PC-9 (cell line): ENCODE measurements at regions of chr2 and their contacts with region 1.

Region 1: GRCh38 chr2:235595422-235596010 is 101.7 kb downstream of the AGAP1 start:
- DNase-seq: peak; percentile 71 to 83
- H3K4me3 ChIP-seq: no peak overlapping the region
- H3K27ac ChIP-seq: no peak overlapping the region
- H3K4me1 ChIP-seq: no peaks in the 10 kb centered on the region
- H3K27me3 ChIP-seq: no peaks in the 10 kb centered on the region
- CTCF ChIP-seq: peak; percentile 98

Region 2: GRCh38 chr2:235116885-235117492 is 478.5 kb before region 1 on chr2:
- CTCF ChIA-PET with region 1: no interaction called
- POLR2A ChIA-PET with region 1: no interaction called
- intact Hi-C with region 1: loop called (anchors 1 kb)
- DNase-seq: peak in 1 of 2 experiments; percentile 55
- H3K4me3 ChIP-seq: no peak overlapping the region
- H3K27ac ChIP-seq: no peak overlapping the region
- H3K4me1 ChIP-seq: no peaks in the 10 kb centered on the region; the same call in 1 of the 2 replicates
- H3K27me3 ChIP-seq: no peaks in the 10 kb centered on the region
- CTCF ChIP-seq: peak; percentile 92

Region 3: DNA sequence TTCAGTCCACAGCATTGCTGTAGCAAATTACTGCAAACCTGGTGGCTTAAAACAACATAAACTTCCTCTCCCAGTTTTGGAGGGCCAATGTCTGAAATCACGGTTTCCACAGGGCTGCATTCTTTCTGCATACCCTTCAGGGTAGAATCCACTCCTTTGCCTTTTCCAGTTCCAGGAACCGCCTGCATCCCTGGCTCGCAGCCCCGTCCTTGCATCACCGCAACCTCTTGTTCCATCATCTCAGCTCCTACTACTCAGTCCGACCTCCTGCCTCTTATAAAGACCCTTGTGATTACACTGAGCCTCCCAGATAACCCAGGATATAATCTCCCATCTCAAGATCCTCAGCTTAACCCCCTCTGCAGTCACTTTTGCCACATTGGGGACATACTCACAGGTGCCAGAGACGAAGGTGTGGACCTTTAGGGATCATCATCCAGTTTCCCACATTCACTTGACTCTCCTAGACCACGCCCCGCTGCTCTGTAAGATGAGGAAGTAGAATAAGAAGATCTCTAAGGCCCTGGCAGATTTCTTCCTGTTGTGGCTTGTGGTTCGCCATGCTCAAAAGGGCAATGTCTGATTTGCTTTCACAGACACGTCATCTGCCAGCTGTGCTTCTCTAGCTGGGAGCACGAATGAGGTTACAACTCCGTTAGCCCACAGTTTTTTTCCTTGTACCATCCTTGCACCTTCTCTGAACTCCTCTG is 205.3 kb before region 1 on chr2:
- CTCF ChIA-PET with region 1: no interaction called
- POLR2A ChIA-PET with region 1: no interaction called
- intact Hi-C with region 1: loop called (anchors 1 kb)
- DNase-seq: peak in 1 of 2 experiments; percentile 67
- H3K4me3 ChIP-seq: no peak overlapping the region
- H3K27ac ChIP-seq: no peak overlapping the region
- H3K4me1 ChIP-seq: peaks cover 27% of the 10 kb centered on the region
- H3K27me3 ChIP-seq: no peaks in the 10 kb centered on the region
- CTCF ChIP-seq: no peak

Region 4: GRCh38 chr2:235500761-235501672 is 94.5 kb before region 1 on chr2:
- CTCF ChIA-PET with region 1: interaction called, 4 read pairs
- POLR2A ChIA-PET with region 1: interaction called, 40 read pairs
- intact Hi-C with region 1: no loop called
- DNase-seq: peak; percentile 48 to 76
- H3K4me3 ChIP-seq: peak overlapping the region; percentile 29; the same call in 1 of the 2 replicates
- H3K27ac ChIP-seq: peak overlapping the region; percentile 61
- H3K4me1 ChIP-seq: peaks cover 65% of the 10 kb centered on the region
- H3K27me3 ChIP-seq: no peaks in the 10 kb centered on the region
- CTCF ChIP-seq: no peak

Region 5: GRCh38 chr2:235669269-235669831 is 73.8 kb after region 1 on chr2:
- CTCF ChIA-PET with region 1: interaction called, 4 read pairs
- POLR2A ChIA-PET with region 1: no interaction called
- intact Hi-C with region 1: loop called (anchors 1 kb)
- DNase-seq: peak; percentile 79 to 94
- H3K4me3 ChIP-seq: peak overlapping the region; percentile 41; the same call in 1 of the 2 replicates
- H3K27ac ChIP-seq: no peak overlapping the region
- H3K4me1 ChIP-seq: peaks cover 54% of the 10 kb centered on the region
- H3K27me3 ChIP-seq: no peaks in the 10 kb centered on the region
- CTCF ChIP-seq: no peak

Region 6: GRCh38 chr2:236180831-236181453 is 585.4 kb after region 1 on chr2:
- CTCF ChIA-PET with region 1: no interaction called
- POLR2A ChIA-PET with region 1: no interaction called
- intact Hi-C with region 1: loop called (anchors 2 kb)
- DNase-seq: peak; percentile 59 to 69
- H3K4me3 ChIP-seq: no peak overlapping the region
- H3K27ac ChIP-seq: no peak overlapping the region
- H3K4me1 ChIP-seq: peaks cover 13% of the 10 kb centered on the region
- H3K27me3 ChIP-seq: no peaks in the 10 kb centered on the region
- CTCF ChIP-seq: peak; percentile 96